ENCODE measurements at regions of chr2 and their contacts with region 1.

Region 1: GRCh38 chr2:134245340-134245984 is 8.4 kb upstream of the MGAT5 start:
- DNase-seq: peak; percentile 70
- H3K4me3 Mint-ChIP-seq: no peak overlapping the region
- H3K27ac Mint-ChIP-seq: no peak overlapping the region
- H3K4me1 Mint-ChIP-seq: peaks cover 6% of the 10 kb centered on the region
- H3K27me3 Mint-ChIP-seq: no peaks in the 10 kb centered on the region
- CTCF ChIP-seq: peak; percentile 75

Region 2: GRCh38 chr2:133886735-133887660 is 358.5 kb before region 1 on chr2:
- CTCF ChIA-PET with region 1: interaction called, 47 read pairs
- POLR2A ChIA-PET with region 1: no interaction called
- intact Hi-C with region 1: loop called (anchors 1 kb)
- DNase-seq: peak; percentile 87
- H3K4me3 Mint-ChIP-seq: no peak overlapping the region
- H3K27ac Mint-ChIP-seq: no peak overlapping the region
- H3K4me1 Mint-ChIP-seq: peaks cover 7% of the 10 kb centered on the region
- H3K27me3 Mint-ChIP-seq: peaks cover 14% of the 10 kb centered on the region
- CTCF ChIP-seq: peak; percentile 52

Region 3: GRCh38 chr2:134198006-134198634 is 47.3 kb before region 1 on chr2:
- CTCF ChIA-PET with region 1: interaction called, 14 read pairs
- POLR2A ChIA-PET with region 1: no interaction called
- intact Hi-C with region 1: no loop called
- DNase-seq: no peak
- H3K4me3 Mint-ChIP-seq: no peak overlapping the region
- H3K27ac Mint-ChIP-seq: no peak overlapping the region
- H3K4me1 Mint-ChIP-seq: peaks cover 17% of the 10 kb centered on the region
- H3K27me3 Mint-ChIP-seq: no peaks in the 10 kb centered on the region
- CTCF ChIP-seq: no peak

Region 4: DNA sequence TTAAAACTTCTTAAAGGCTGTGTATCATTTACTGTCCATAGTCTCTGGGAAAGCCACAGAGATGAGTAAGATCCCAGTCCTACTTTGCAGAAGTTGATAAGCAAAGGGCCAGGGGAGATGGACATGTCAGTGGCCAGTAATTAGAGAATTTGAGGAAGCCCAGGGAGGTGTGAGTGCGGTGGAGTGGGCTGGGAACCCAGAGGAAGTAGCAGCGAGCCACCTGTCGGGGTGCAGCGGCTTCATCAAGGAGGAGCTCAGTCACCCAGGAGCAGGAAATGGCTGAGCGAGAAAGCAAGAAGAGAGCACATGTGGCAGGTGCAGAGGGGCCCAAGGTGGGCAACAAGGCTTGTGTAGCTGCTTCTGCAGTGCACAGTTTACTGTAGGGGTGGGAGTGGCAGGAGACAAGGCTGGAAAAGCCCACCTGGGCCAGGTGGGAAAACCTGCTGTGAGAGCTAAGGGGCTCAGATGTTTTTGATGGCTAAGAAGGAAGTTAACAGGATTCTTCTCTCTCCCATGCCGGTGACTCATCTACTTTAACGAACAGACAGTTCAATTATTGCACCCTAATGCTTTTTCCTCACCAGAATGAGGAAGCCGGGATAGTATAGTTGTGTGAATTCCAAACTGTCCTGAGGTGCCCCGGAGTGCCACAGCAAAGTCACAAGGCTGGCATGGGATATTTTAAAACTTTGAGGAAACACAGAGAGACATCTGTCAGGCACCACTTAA is 26.4 kb before region 1 on chr2:
- CTCF ChIA-PET with region 1: interaction called, 14 read pairs
- POLR2A ChIA-PET with region 1: no interaction called
- intact Hi-C with region 1: no loop called
- DNase-seq: no peak
- H3K4me3 Mint-ChIP-seq: no peak overlapping the region
- H3K27ac Mint-ChIP-seq: no peak overlapping the region
- H3K4me1 Mint-ChIP-seq: peaks cover 18% of the 10 kb centered on the region
- H3K27me3 Mint-ChIP-seq: no peaks in the 10 kb centered on the region
- CTCF ChIP-seq: no peak

Region 5: GRCh38 chr2:134261398-134262131 is 16.1 kb after region 1 on chr2:
- CTCF ChIA-PET with region 1: interaction called, 40 read pairs
- POLR2A ChIA-PET with region 1: no interaction called
- intact Hi-C with region 1: no loop called
- DNase-seq: no peak
- H3K4me3 Mint-ChIP-seq: no peak overlapping the region
- H3K27ac Mint-ChIP-seq: no peak overlapping the region
- H3K4me1 Mint-ChIP-seq: peaks cover 6% of the 10 kb centered on the region
- H3K27me3 Mint-ChIP-seq: no peaks in the 10 kb centered on the region
- CTCF ChIP-seq: no peak

Region 6: GRCh38 chr2:134508391-134508790 is 262.9 kb after region 1 on chr2:
- CTCF ChIA-PET with region 1: no interaction called
- POLR2A ChIA-PET with region 1: no interaction called
- intact Hi-C with region 1: no loop called
- DNase-seq: no peak
- H3K4me3 Mint-ChIP-seq: no peak overlapping the region
- H3K27ac Mint-ChIP-seq: no peak overlapping the region
- H3K4me1 Mint-ChIP-seq: no peaks in the 10 kb centered on the region
- H3K27me3 Mint-ChIP-seq: peaks cover 6% of the 10 kb centered on the region
- CTCF ChIP-seq: no peak

Measured in MCF 10A (cell line).